WTC11 (cell line): ENCODE measurements at regions of chr6 and their contacts with region 1.

Region 1: DNA sequence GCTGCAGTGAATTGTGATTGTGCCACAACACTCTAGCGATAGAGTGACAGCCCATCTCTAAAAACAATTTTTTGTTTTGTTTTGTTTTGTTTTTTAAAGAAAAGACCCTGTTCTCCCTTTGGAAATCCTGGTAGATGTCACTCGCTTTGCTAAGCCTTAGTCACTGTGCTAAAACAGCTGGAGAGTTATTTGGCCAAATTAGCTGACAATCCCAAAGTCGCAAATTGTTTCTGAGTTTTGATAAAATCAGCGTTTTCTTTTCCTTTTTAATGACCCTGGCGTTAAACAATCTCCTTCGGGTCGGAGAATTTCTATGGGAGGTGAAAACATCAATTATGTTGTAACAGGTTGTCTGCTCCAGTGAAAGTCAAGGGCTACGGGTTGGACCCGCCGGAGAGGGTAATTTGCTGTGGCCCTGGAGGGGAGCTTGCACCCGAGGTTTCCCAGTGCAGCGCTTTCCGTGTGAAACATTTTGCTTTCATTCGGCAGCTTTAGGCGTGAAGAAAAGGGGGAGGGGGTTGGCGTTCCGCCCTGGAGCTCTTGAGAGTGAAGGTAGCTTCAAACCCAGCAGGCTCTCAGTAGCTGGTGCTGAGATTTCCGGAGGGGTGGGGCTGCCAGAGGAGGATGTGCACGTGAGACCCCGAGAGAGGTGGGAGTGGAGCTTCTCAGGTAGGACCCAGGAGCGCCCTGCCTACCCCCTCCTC is 296.6 kb downstream of the PHACTR1 start:
- DNase-seq: peak; percentile 84
- ATAC-seq: peak; percentile 89
- H3K4me3 Mint-ChIP-seq: peak overlapping the region; percentile 84
- H3K27ac Mint-ChIP-seq: no peak overlapping the region
- H3K4me1 Mint-ChIP-seq: peaks cover 40% of the 10 kb centered on the region
- H3K27me3 Mint-ChIP-seq: peaks cover 54% of the 10 kb centered on the region
- CTCF ChIP-seq: no peak

Region 2: DNA sequence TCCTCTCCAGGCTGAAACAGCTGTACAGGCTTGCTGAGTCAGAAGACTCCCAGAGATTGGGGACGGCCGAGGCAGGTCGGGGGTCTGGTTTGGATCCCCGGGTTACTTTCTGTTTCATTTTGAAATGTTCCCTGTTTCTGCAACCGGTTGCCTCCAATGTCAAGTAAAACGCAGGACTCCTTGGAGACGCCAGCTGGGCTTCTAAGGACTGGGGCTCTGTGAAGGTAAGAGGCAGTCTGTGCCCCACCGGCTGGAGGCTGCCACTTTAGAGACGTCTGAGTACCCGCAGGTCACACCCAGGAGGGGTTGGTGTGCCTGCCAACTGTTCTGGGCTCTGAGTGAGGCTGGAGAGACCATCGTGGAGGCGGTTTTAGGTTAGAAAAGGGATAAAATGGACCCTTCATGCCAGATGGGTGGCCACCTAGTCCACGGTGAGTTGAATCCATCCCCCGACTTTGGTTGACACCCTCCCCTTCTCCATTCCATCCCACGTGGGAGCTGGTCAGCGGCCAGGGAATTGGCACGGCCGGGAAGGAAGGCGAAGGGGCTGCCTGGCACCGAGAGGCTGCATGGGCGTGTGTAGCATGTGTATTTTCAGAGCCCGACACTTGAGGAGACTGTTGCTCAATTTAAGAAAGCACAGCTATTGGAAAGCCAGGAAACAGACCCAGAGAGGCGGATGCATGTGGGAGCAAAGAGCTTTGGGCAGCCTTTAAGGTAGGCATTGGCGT is 55.6 kb before region 1 on chr6:
- CTCF ChIA-PET with region 1: interaction called, 12 read pairs
- POLR2A ChIA-PET with region 1: interaction called, 3 read pairs
- DNase-seq: peak; percentile 21
- ATAC-seq: peak; percentile 32
- H3K4me3 Mint-ChIP-seq: peak overlapping the region; percentile 67
- H3K27ac Mint-ChIP-seq: no peak overlapping the region
- H3K4me1 Mint-ChIP-seq: peaks cover 43% of the 10 kb centered on the region
- H3K27me3 Mint-ChIP-seq: peaks cover 79% of the 10 kb centered on the region
- CTCF ChIP-seq: no peak